ENCODE measurements at regions of chr2 and their contacts with region 1.

Region 1: DNA sequence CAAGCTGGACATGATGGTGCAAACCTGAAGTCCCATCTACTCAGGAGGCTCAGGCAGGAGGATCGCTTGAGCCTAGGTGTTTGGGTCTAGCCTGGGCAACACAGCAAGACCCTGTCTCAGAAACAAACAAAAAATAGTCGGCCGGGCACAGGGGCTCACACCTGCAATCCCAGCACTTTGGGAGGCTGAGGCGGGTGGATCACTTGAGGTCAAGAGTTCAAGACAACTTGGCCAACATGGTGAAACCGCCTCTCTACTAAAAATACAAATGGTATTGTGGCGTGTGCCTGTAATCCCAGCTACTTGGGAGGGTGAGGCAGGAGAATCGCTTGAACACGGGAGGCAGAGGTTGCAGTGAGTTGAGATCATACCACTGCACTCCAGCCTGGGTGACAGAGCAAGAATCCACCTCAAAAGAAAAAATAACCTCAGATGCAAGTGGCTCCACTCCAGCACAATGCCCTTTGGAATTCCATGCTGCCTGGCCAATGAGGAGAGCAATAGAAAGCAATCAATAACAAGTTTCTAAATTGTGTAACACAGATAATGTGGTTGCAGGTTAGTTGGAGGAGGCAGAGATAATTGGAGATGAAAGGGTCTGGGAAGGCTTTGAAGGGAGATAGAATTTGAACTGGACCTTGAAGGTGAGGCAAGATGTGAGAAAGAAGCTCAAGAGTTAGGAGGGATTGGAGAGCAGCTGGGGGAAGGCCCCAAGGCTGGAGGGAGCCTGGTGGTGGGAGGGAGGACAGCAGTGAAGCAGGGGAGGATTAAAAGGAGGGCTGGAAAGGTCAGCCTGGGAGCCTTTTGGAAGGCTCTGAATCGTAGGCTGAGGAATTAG is 6.0 kb downstream of the TTC31 start:
- DNase-seq: peak; percentile 93
- ATAC-seq: peak; percentile 83
- H3K4me3 ChIP-seq: peak overlapping the region in 1 of 3 experiments; percentile 18; a peak in 2 of 6 replicates
- H3K27ac ChIP-seq: peak overlapping the region; percentile 84
- H3K4me1 ChIP-seq: peaks cover 77% of the 10 kb centered on the region
- H3K27me3 ChIP-seq: no peaks in the 10 kb centered on the region
- CTCF ChIP-seq: 0 out of 2 replicates have a peak, but pooled peaks have one; percentile 3
- EP300 ChIP-seq: peak; percentile 92 to 98
- POLR2A ChIP-seq: peak; percentile 28 to 65; a peak in 1 of 4 replicates
- RAD21 ChIP-seq: no peak

Region 2: DNA sequence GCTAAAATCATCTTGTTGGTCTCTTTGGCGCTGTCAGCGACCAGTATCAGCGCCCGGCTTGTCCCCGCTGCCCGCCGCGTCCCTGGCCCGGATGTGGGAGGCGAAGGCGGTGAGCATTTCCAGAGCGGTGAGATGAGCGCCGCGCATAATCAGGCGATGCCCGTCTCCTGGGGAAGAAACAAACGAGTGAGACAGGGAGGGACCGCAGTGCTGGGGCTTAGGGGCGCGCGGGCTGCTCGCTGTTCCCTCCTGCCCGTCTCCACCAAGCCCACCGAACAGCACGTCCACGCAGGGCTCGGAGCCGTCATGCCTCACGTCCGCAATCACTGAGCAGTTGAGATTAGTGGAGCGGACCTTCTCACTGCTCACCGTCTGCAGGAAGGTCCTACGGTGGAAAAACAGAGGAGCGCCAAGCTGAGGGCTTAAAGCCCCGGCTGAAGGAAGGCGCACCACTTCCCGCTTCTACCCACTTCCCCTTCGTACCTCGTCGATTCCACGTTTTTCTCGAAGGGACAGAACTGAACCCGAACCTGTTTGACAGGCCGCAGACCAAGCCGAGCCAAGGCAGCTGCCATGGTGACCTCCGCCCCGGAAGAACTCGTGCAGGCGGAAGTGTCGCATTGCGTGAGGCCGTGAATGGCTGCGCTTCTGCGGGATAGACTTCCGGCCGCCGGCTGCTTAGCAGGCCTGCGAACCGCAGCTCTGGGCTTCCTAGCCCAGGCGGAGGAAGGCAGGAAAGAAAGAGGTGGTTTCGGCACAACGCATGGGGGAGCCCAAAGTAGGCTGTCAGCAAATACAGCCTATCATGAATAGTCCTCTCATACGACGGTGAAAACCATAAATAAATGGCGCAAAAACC is 16.5 kb before region 1 on chr2 and contains the start of gene MRPL53:
- CTCF ChIA-PET with region 1: no interaction called
- POLR2A ChIA-PET with region 1: interaction called, 110 read pairs
- in situ Hi-C with region 1: no loop called
- intact Hi-C with region 1: no loop called
- DNase-seq: peak; percentile 92
- ATAC-seq: peak; percentile 87
- H3K4me3 ChIP-seq: peak within 1 kb of the TSS; percentile 67 to 91 (median 83)
- H3K27ac ChIP-seq: peak within 1 kb of the TSS; percentile 83
- H3K4me1 ChIP-seq: peaks cover 52% of the 10 kb centered on the region
- H3K27me3 ChIP-seq: no peaks in the 10 kb centered on the region; a peak in 1 of 5 replicates
- CTCF ChIP-seq: peak; percentile 42; the same call in 1 of the 2 replicates
- EP300 ChIP-seq: peak in 1 of 2 experiments; percentile 54; a peak in 2 of 4 replicates
- POLR2A ChIP-seq: peak; percentile 94 to 97
- RAD21 ChIP-seq: peak; percentile 45; the same call in 1 of the 2 replicates
- total RNA-seq, gene MRPL53: 51.9 and 53.8 TPM in 2 replicates